Heart right ventricle (tissue), 16 donors: ENCODE measurements at regions of chr10 and their contacts with region 1.

Region 1: DNA sequence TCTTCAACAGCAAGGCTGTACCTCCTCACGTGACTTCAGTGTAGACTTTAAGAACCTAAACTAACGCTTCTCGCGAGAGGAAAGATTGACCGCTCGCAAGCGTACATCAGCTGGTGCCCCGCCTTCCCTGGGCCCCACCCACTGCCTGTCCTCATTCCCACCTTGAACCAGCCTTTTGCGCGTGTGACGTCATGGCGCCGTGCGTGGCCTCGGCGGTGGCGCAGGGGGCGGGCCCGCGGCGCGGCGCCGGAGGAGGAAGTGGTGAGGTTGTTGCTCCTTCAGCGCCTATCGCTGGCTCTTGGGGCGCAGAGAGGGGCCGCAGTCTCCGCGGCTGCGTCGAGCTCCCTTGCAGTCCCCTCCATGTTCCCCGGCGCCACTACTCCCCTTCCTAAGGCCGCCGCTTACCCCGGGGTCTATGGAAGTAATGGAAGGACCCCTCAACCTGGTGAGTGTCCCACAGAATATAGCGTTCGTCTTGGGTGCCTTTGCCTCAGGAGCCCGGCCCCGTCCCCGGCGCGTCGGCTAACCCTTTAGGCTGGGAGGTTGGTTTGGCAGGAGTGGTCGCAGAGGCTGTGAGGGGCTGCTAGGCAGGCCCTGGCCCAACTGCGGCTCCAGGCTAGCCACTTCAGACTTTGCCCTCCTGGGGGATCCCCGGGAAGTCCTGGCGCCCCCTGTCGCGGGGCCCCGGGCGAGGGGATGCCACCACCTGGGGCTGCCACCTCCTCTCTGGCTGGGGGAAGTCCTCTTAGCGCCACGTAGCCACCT is at the start of gene NRBF2:
- DNase-seq: peak; percentile 98
- ATAC-seq: peak; percentile 99 to 100 (median 100)
- H3K4me3 ChIP-seq: peak within 1 kb of the TSS; percentile 77 to 99 (median 94)
- H3K27ac ChIP-seq: peak within 1 kb of the TSS; percentile 73 to 98 (median 93)
- H3K4me1 ChIP-seq: peaks cover 0 to 43% (median 38%) of the 10 kb centered on the region in 9 donors
- H3K27me3 ChIP-seq: no peaks in the 10 kb centered on the region
- CTCF ChIP-seq: peak in 6 of 9 donors; percentile 9 to 41 (median 30)
- total RNA-seq, gene NRBF2: 8.6 to 18.2 (median 10.2) TPM

Region 2: DNA sequence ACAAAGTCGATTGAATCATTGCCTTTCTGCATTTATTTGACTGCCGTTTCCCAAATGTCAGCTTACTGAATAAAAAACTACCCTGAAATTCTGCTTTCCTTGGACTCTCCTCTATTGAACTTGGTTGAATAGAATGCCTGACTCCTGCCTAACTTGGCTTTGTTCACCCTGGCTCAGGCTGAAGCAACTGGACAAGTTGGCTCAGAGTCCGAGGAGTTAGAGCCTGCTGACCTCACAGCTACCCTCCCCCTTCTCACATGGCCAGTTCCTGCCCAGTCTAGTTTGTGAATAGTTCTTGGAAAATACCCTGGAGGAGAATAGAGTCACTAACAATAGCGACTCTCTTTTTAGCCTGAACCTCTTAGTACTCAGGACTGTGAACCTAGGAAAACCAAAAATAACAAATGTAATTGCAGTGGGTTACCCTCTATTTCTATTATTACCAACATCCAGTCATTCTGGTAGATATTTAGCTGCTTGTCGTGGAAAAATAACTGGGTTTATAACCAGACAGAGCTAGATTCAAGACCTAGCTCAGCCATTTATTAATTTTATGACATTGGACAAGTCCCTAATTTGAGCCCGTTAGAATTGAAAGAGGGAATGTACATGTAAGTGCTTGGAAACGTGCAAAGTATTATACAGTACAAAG is 17.4 kb before region 1 on chr10:
- intact Hi-C with region 1: loop called in 3 of 10 experiments (anchors 1 to 2 kb)
- DNase-seq: peak; percentile 63 to 94
- ATAC-seq: peak; percentile 95 to 98 (median 96)
- H3K4me3 ChIP-seq: no peak overlapping the region
- H3K27ac ChIP-seq: peak overlapping the region; percentile 30 to 91 (median 84)
- H3K4me1 ChIP-seq: peaks cover 3 to 41% (median 29%) of the 10 kb centered on the region in 9 donors
- H3K27me3 ChIP-seq: no peaks in the 10 kb centered on the region
- CTCF ChIP-seq: peak in 1 of 9 donors; percentile 12